ENCODE measurements at regions of chr16 and their contacts with region 1.

Region 1: DNA sequence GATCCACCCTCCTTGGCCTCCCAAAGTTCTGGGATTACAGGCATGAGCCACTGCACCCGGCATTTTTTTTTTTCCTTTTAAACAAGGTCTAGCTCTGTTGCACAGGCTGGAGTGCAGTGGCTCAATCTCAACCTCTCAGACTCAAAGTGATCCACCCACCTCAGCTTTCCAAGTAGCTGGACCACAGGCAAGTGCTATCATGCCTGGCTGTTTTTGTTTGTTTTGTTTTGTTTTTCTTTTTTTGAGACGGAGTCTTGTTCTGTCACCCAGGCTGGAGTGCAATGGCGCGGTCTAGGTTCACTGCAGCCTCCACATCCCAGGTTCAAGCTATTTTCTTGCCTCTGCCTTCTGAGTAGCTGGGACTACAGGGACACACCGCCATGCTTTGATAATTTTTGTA is 19.0 kb upstream of the ZC3H7A start:
- DNase-seq: no peak
- ATAC-seq: no peak
- H3K4me3 Mint-ChIP-seq: no peak overlapping the region
- H3K27ac Mint-ChIP-seq: no peak overlapping the region
- H3K4me1 Mint-ChIP-seq: peaks cover 3% of the 10 kb centered on the region
- H3K27me3 Mint-ChIP-seq: no peaks in the 10 kb centered on the region
- CTCF ChIP-seq: no peak

Region 2: DNA sequence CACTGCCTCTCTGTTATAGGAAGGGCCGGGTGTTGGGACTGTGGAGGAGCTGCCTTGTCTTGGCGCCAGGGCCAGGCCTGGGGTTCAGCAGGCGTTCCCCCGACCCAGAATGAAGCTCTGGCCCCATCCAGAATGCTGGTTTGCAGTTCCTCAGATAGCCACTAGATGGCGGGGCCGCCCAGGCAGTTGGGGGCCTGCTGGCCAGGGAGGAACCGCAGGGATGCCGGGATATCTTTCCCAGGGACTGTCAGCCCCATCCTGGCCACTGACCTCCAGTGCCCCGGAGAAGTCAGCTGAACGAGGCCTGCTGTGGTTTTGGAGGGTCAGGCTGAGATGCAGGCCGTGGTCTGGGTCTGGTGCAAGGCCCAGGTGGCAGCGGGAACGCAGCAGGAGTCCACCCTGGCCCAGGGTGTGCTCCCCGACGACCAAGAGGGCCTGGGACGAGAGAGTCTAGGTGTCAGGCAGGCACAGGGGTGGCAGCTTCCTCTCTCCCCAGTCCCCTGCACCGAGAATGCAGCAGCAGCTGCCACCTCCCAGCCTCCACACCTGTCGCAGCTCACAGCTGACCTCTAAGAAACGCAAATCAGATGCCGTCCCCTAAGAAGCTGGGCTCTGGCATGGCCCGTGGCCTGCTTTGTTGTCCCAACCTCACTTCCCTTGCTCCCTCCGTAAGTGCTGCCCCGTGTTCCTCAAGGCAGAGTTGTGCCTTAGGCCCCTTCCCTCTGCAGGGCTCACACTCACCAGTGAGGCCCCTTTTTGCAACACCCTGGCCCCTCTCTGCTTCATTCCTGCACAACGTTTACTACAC is 419.7 kb before region 1 on chr16:
- CTCF ChIA-PET with region 1: no interaction called
- POLR2A ChIA-PET with region 1: interaction called, 12 read pairs
- intact Hi-C with region 1: loop called (anchors 2 kb)
- DNase-seq: peak; percentile 63
- ATAC-seq: peak; percentile 81
- H3K4me3 Mint-ChIP-seq: no peak overlapping the region
- H3K27ac Mint-ChIP-seq: no peak overlapping the region
- H3K4me1 Mint-ChIP-seq: peaks cover 4% of the 10 kb centered on the region
- H3K27me3 Mint-ChIP-seq: no peaks in the 10 kb centered on the region
- CTCF ChIP-seq: peak; percentile 90

Region 3: DNA sequence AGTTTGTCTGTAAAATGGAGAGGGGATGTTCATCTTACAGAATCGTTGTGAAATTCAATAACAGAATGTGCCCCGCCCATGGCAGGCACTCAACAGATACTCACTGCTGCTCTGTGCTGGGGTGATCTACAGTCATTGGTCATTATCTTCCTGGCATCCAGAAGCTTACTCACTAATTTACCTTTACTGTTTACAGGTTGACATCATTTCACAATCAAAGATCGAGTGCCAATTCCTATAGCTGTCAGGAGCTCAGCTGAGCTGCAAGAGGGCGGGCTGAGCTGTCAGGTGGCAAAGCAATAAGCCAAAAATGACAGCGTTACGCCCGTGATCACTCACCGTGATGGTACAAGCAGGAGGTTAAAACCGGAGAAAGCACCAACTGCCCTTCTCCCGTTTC is 280.6 kb before region 1 on chr16:
- CTCF ChIA-PET with region 1: interaction called, 5 read pairs
- POLR2A ChIA-PET with region 1: interaction called, 5 read pairs
- intact Hi-C with region 1: loop called (anchors 1 kb)
- DNase-seq: no peak
- ATAC-seq: no peak
- H3K4me3 Mint-ChIP-seq: no peak overlapping the region
- H3K27ac Mint-ChIP-seq: no peak overlapping the region
- H3K4me1 Mint-ChIP-seq: no peaks in the 10 kb centered on the region
- H3K27me3 Mint-ChIP-seq: no peaks in the 10 kb centered on the region
- CTCF ChIP-seq: no peak

Region 4: GRCh38 chr16:11639925-11640899 is 175.9 kb before region 1 on chr16:
- CTCF ChIA-PET with region 1: no interaction called
- POLR2A ChIA-PET with region 1: no interaction called
- intact Hi-C with region 1: loop called (anchors 1 kb)
- DNase-seq: no peak
- ATAC-seq: no peak
- H3K4me3 Mint-ChIP-seq: no peak overlapping the region
- H3K27ac Mint-ChIP-seq: no peak overlapping the region
- H3K4me1 Mint-ChIP-seq: peaks cover 8% of the 10 kb centered on the region
- H3K27me3 Mint-ChIP-seq: no peaks in the 10 kb centered on the region
- CTCF ChIP-seq: no peak

Region 5: GRCh38 chr16:11651796-11652195 is 164.3 kb before region 1 on chr16:
- CTCF ChIA-PET with region 1: no interaction called
- POLR2A ChIA-PET with region 1: no interaction called
- intact Hi-C with region 1: no loop called
- DNase-seq: no peak
- ATAC-seq: no peak
- H3K4me3 Mint-ChIP-seq: no peak overlapping the region
- H3K27ac Mint-ChIP-seq: no peak overlapping the region
- H3K4me1 Mint-ChIP-seq: peaks cover 14% of the 10 kb centered on the region
- H3K27me3 Mint-ChIP-seq: no peaks in the 10 kb centered on the region
- CTCF ChIP-seq: no peak

Region 6: GRCh38 chr16:11768849-11769248 is 47.3 kb before region 1 on chr16:
- CTCF ChIA-PET with region 1: no interaction called
- POLR2A ChIA-PET with region 1: no interaction called
- intact Hi-C with region 1: loop called (anchors 1 kb)
- DNase-seq: no peak
- ATAC-seq: peak; percentile 79
- H3K4me3 Mint-ChIP-seq: peak overlapping the region; percentile 61
- H3K27ac Mint-ChIP-seq: peak overlapping the region; percentile 90
- H3K4me1 Mint-ChIP-seq: peaks cover 50% of the 10 kb centered on the region
- H3K27me3 Mint-ChIP-seq: no peaks in the 10 kb centered on the region
- CTCF ChIP-seq: no peak